Tibial artery (tissue), 4 donors: ENCODE measurements at regions of chr2 and their contacts with region 1.

Region 1: GRCh38 chr2:151860613-151861146 is 32.5 kb upstream of the ARL5A start:
- DNase-seq: no peak
- H3K4me3 ChIP-seq: no peak overlapping the region
- H3K27ac ChIP-seq: no peak overlapping the region
- H3K4me1 ChIP-seq: peaks cover 0 to 9% (median 0%) of the 10 kb centered on the region in 4 donors
- H3K27me3 ChIP-seq: no peaks in the 10 kb centered on the region
- CTCF ChIP-seq: no peak

Region 2: GRCh38 chr2:151769606-151770005 is 91.1 kb before region 1 on chr2:
- intact Hi-C with region 1: loop called (anchors 2 kb)
- DNase-seq: no peak
- H3K4me3 ChIP-seq: no peak overlapping the region
- H3K27ac ChIP-seq: no peak overlapping the region
- H3K4me1 ChIP-seq: peaks cover 0 to 7% (median 0%) of the 10 kb centered on the region in 4 donors
- H3K27me3 ChIP-seq: no peaks in the 10 kb centered on the region
- CTCF ChIP-seq: no peak